AG04449 (cell line): ENCODE measurements at regions of chr4 and their contacts with region 1.

Region 1: DNA sequence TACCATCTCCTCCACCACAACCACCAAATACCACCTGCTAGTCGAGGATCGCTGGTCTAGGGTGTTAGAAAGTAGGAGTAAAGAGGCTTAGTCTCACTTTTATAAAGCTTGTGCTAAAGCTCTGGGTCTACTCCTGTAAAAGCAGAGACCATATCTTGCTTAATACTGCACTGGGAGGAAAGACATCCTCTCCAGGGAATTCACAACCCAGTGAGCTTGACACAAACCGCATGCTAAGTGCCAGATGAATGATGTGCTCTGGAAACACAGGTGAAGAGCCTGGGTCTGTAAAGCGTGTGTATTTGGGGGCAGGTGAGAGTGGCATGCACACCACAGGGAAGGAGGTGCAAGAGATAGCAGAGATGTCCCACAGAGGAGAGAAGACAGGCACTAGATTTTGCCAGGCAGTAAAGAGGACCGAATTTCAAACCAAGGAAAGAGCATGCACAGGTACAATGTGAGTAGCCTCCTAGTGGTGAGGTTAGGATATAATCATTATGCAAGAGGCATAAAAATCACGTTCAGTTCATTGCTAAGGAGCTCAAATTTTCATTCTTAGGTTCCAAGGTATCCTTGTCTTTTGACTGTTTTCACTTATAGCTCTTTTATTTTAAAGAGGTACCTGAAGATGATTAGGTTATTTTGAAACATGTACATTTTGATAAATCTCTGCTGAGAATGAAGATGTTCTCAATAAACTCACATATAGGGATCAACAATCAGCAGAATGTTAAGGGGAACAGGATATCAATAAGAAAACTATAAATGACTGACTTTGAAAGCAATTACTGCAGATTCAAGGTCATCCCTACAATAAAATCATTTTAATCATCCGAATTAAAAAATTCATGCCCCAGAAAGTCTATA is 20.7 kb downstream of the TAPT1 start:
- DNase-seq: no peak
- H3K4me3 ChIP-seq: no peak overlapping the region
- CTCF ChIP-seq: peak; percentile 52

Region 2: DNA sequence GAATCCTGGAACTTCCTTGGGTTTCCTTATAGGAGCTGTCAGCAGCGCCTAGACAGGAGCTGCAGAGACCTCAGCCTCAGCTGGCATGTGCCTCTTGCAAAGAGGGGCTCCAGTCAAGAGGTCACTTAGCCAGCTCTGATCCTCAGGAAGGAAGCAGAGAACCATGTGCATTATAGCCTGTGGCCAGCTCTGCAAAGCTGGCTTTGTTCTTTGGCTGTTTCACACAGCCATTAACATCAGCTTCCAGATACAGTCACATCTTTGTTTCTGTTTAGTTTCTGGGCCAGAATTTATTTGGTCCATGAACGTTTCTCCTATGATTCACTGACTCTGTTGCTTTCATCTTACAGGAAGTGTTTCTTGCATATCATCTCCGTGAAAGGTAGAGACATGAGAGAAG is 643.4 kb before region 1 on chr4:
- CTCF ChIA-PET with region 1: no interaction called
- POLR2A ChIA-PET with region 1: no interaction called
- DNase-seq: no peak
- H3K4me3 ChIP-seq: no peak overlapping the region
- CTCF ChIP-seq: no peak

Region 3: DNA sequence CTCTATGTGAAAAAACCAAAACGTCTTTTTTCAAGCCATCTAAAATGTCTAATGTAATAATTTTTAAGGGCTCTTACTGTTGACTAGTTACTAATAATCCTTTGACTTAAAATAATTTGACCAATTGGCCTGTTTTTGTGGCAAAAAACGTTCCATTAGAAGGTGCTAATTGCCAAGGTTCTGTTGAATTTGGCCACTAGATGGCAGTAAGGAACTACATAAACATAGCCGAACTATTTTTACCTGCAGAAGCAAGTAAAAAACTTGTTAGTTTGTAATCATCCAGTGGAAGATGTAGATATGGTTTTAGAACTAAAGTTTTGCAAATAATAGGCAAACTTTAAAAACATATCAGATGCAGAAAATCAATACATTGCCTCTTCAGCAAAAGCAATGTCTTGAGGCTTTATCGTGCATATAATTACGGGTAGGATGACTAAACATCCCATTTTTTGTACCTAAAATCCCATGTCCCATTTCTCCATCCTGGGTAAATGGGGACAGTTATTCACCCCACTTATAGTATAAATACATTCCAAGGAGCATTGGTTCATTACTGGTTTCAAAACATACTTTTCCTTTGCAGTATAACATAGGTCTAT is 179.3 kb before region 1 on chr4:
- CTCF ChIA-PET with region 1: interaction called, 114 read pairs
- POLR2A ChIA-PET with region 1: no interaction called
- DNase-seq: no peak
- H3K4me3 ChIP-seq: no peak overlapping the region
- CTCF ChIP-seq: peak; percentile 43

Region 4: DNA sequence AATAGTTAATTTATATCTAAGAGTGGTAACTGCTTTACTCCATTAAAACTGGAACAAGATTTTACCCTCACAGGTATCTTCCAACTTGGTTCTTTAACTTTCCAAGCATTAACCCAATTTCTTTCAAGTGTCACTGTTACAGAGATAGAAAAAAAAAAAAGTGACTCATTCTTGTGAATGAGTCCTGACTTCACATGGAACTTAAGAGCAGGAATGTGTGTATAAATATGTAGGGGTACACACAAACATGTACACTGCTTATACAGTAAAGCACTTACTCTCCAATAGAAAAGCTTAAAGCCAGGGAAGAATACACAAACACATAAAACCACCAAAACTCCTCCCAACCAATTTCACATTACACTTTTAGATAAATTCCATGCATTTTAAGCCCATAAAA is 18.1 kb before region 1 on chr4:
- CTCF ChIA-PET with region 1: interaction called, 11 read pairs
- POLR2A ChIA-PET with region 1: no interaction called
- DNase-seq: no peak
- H3K4me3 ChIP-seq: no peak overlapping the region
- CTCF ChIP-seq: no peak

Region 5: GRCh38 chr4:16225863-16226815 is 20.6 kb after region 1 on chr4 and contains the start of gene TAPT1:
- CTCF ChIA-PET with region 1: interaction called, 10 read pairs
- POLR2A ChIA-PET with region 1: no interaction called
- DNase-seq: no peak
- H3K4me3 ChIP-seq: peak within 1 kb of the TSS; percentile 73
- CTCF ChIP-seq: no peak

Region 6: GRCh38 chr4:16384576-16384975 is 179.0 kb after region 1 on chr4:
- CTCF ChIA-PET with region 1: no interaction called
- POLR2A ChIA-PET with region 1: no interaction called
- DNase-seq: no peak
- H3K4me3 ChIP-seq: no peak overlapping the region
- CTCF ChIP-seq: no peak